CD4-positive, alpha-beta T cell (primary cell): ENCODE measurements at regions of chr4 and their contacts with region 1.

Region 1: GRCh38 chr4:87422104-87423052 is at the start of gene NUDT9:
- DNase-seq: peak; percentile 66 to 93 (median 80)
- ATAC-seq: peak; percentile 80
- H3K4me3 ChIP-seq: peak within 1 kb of the TSS; percentile 77
- H3K4me3 Mint-ChIP-seq: peak within 1 kb of the TSS; percentile 95
- H3K27ac ChIP-seq: peak within 1 kb of the TSS; percentile 76 to 87
- H3K27ac Mint-ChIP-seq: peak within 1 kb of the TSS; percentile 97
- H3K4me1 ChIP-seq: peaks cover 31% of the 10 kb centered on the region
- H3K4me1 Mint-ChIP-seq: peaks cover 52% of the 10 kb centered on the region
- H3K27me3 ChIP-seq: no peaks in the 10 kb centered on the region
- H3K27me3 Mint-ChIP-seq: no peaks in the 10 kb centered on the region
- CTCF ChIP-seq: peak; percentile 18
- total RNA-seq, gene NUDT9: 4.4 to 4.8 TPM

Region 2: GRCh38 chr4:87375719-87376291 is 46.6 kb before region 1 on chr4:
- CTCF ChIA-PET with region 1: interaction called, 11 read pairs
- POLR2A ChIA-PET with region 1: no interaction called
- intact Hi-C with region 1: no loop called
- DNase-seq: peak in 4 of 14 experiments; percentile 11 to 63 (median 50)
- ATAC-seq: no peak
- H3K4me3 ChIP-seq: no peak overlapping the region
- H3K4me3 Mint-ChIP-seq: no peak overlapping the region
- H3K27ac ChIP-seq: no peak overlapping the region
- H3K27ac Mint-ChIP-seq: no peak overlapping the region
- H3K4me1 ChIP-seq: no peaks in the 10 kb centered on the region
- H3K4me1 Mint-ChIP-seq: peaks cover 6% of the 10 kb centered on the region
- H3K27me3 ChIP-seq: no peaks in the 10 kb centered on the region
- H3K27me3 Mint-ChIP-seq: no peaks in the 10 kb centered on the region
- CTCF ChIP-seq: no peak